ENCODE measurements at regions of chr17 and their contacts with region 1.

Region 1: DNA sequence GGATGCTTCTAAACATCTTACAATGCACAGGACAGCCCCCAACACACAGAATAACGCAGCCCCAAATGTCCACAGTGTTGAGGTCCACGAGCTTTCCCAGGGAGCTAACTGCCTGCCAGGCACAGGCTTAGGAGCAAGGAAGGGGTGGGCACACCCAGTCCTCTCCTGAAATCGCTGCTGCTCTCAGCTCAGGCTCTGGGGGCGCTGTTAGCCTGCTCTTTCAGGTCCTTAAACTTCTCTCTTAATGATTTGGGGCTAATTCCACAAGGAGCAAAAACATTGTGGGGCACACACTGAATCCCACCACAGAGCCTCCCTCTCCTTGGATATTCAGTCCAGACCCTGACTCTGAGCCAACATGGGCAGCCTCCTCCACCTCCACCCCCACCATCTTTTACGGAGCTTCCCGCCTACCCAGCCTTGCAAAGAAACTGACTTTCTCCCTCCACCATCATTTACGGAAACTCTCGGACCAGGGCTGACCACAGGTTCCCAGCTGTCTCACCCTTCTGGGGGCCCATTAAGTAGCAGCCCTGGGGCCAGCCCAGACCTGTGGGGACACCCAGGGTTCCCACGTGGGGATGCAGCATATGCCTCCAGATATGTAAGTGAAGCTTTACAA is 1.1 kb downstream of the CD300H start:
- DNase-seq: peak; percentile 78
- H3K4me3 Mint-ChIP-seq: no peak overlapping the region
- H3K27ac Mint-ChIP-seq: no peak overlapping the region
- H3K4me1 Mint-ChIP-seq: peaks cover 33% of the 10 kb centered on the region
- H3K27me3 Mint-ChIP-seq: no peaks in the 10 kb centered on the region
- CTCF ChIP-seq: peak; percentile 66

Region 2: DNA sequence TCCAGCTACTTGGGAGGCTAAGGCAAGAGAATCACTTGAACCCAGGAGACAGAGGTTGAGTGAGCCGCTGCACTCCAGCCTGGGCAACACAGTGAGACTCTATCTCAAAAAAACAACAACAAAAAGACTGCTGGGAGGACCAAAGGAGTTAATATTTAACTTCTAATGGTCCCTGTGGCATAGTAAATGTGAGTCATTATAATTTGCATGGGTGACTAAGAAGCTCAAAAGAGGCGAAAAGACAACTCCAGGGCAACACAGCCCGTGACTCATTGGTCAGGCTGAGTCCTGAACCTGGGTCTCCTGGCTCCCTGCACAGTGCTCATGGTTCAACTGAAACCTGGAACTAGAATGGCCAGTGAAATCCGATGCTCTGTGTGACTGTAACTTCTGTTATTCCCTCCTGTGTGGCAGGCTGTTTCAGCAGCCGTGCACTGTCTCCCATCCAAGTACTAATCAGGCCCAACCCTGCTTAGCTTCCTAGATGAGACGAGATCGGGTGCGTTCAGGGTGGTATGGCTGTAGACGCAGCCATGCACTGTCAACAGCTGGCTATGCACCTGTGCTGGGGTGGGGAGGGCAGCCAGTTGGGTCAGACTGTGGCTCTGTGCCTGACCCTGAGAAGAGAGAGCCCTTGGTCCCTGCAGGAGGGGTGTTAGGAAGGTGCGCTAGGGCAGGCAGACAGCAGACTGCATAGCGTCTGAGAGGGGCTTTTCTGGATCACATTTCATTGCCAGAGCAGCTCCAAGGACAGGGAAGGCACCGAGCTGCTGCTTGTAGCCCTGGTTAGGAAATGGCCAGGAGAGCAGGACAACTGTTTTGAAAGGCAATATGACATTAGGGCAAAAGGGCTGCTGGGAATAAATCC is 148.8 kb before region 1 on chr17:
- CTCF ChIA-PET with region 1: no interaction called
- POLR2A ChIA-PET with region 1: no interaction called
- intact Hi-C with region 1: no loop called
- DNase-seq: peak; percentile 87
- H3K4me3 Mint-ChIP-seq: no peak overlapping the region
- H3K27ac Mint-ChIP-seq: no peak overlapping the region
- H3K4me1 Mint-ChIP-seq: peaks cover 5% of the 10 kb centered on the region
- H3K27me3 Mint-ChIP-seq: no peaks in the 10 kb centered on the region
- CTCF ChIP-seq: no peak

Region 3: DNA sequence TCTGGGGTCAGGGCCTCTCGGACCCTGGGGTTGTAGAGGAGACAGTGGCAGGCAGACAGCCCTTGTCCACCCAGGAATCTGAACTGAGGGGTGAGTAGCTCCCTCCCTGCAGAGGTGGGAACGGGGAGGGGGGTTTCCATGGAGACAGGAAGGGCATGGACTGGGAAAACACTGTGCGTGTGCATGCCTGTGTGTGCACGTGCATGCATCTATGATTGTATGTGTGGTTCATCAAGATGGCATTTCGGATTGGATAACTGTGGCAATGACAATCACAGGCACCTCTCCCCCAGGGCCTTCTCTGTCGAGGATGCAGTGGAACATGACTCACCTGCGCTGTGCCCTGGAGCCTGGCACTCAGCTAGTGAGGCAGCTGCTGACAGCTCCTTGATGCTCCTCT is 14.2 kb before region 1 on chr17:
- CTCF ChIA-PET with region 1: interaction called, 9 read pairs
- POLR2A ChIA-PET with region 1: interaction called, 14 read pairs
- intact Hi-C with region 1: no loop called
- DNase-seq: peak; percentile 66
- H3K4me3 Mint-ChIP-seq: no peak overlapping the region
- H3K27ac Mint-ChIP-seq: no peak overlapping the region
- H3K4me1 Mint-ChIP-seq: peaks cover 26% of the 10 kb centered on the region
- H3K27me3 Mint-ChIP-seq: no peaks in the 10 kb centered on the region
- CTCF ChIP-seq: no peak

Region 4: GRCh38 chr17:74601944-74602572 is 35.8 kb after region 1 on chr17:
- CTCF ChIA-PET with region 1: interaction called, 8 read pairs
- POLR2A ChIA-PET with region 1: interaction called, 11 read pairs
- intact Hi-C with region 1: loop called (anchors 1 kb)
- DNase-seq: peak; percentile 80
- H3K4me3 Mint-ChIP-seq: no peak overlapping the region
- H3K27ac Mint-ChIP-seq: no peak overlapping the region
- H3K4me1 Mint-ChIP-seq: peaks cover 45% of the 10 kb centered on the region
- H3K27me3 Mint-ChIP-seq: no peaks in the 10 kb centered on the region
- CTCF ChIP-seq: peak; percentile 88

Region 5: DNA sequence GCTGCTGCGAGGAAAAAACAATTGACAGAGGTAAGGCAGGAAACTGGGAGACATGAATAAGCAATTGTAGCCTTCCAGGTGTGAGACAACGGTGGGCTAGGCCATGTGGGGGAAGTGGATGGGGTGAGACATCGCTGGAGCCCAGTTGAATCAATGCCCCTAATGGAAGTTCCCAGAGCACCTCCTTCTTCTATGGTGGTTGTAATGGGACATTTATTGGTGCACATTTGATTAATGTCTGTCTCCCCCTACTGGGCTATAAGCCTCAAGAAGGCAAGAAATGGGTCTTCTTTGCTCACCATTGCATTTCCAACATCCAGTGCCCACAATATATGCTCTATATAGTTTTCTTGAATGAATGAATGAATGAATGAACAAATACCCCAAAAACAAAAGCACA is 80.0 kb after region 1 on chr17:
- CTCF ChIA-PET with region 1: no interaction called
- POLR2A ChIA-PET with region 1: no interaction called
- intact Hi-C with region 1: loop called (anchors 1 kb)
- DNase-seq: peak; percentile 61
- H3K4me3 Mint-ChIP-seq: no peak overlapping the region
- H3K27ac Mint-ChIP-seq: no peak overlapping the region
- H3K4me1 Mint-ChIP-seq: no peaks in the 10 kb centered on the region
- H3K27me3 Mint-ChIP-seq: peaks cover 52% of the 10 kb centered on the region
- CTCF ChIP-seq: peak; percentile 62